WTC11 (cell line): ENCODE measurements at regions of chr12 and their contacts with region 1.

Region 1: DNA sequence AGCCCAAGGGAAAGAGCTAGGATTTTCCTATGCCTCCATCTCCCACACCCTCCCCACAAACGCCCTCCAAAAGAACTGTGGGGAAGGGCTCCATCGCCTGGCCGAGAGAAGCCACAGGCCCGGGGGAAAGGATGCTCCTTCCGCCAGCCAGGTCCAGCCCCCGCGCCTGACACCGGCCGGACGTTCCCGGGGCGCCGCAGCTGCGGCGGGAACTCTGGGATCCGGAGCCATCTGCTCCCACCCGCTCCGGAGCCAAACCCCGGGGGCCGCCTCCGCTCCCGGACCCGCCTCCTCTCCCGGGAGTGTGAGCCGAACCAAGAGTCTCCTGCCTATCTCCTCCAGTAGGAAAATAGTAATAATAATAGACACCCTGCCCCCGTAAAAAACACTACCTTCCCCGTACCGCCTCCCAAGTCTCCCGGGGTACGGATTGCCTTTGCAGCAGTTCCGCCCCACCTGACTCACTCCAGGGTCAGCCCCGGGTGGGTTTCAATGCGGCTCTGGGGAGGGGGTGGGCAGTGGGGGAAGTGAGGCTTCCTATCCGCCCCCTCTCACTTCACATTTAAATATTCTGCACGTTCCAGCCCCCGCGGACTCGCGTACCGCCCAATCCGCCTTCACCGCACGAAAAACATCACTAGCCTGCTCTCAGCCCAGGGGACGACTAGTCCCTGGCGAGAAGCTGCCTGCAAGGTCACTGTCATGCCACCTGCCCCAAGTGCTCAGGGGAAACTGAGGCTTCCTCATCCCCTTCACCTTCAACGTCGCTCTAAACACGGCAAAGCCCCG is 2.4 kb downstream of the AGAP2 start:
- DNase-seq: peak; percentile 80
- ATAC-seq: peak; percentile 70
- H3K4me3 Mint-ChIP-seq: peak overlapping the region; percentile 75
- H3K27ac Mint-ChIP-seq: no peak overlapping the region
- H3K4me1 Mint-ChIP-seq: peaks cover 25% of the 10 kb centered on the region
- H3K27me3 Mint-ChIP-seq: peaks cover 95% of the 10 kb centered on the region
- CTCF ChIP-seq: no peak

Region 2: DNA sequence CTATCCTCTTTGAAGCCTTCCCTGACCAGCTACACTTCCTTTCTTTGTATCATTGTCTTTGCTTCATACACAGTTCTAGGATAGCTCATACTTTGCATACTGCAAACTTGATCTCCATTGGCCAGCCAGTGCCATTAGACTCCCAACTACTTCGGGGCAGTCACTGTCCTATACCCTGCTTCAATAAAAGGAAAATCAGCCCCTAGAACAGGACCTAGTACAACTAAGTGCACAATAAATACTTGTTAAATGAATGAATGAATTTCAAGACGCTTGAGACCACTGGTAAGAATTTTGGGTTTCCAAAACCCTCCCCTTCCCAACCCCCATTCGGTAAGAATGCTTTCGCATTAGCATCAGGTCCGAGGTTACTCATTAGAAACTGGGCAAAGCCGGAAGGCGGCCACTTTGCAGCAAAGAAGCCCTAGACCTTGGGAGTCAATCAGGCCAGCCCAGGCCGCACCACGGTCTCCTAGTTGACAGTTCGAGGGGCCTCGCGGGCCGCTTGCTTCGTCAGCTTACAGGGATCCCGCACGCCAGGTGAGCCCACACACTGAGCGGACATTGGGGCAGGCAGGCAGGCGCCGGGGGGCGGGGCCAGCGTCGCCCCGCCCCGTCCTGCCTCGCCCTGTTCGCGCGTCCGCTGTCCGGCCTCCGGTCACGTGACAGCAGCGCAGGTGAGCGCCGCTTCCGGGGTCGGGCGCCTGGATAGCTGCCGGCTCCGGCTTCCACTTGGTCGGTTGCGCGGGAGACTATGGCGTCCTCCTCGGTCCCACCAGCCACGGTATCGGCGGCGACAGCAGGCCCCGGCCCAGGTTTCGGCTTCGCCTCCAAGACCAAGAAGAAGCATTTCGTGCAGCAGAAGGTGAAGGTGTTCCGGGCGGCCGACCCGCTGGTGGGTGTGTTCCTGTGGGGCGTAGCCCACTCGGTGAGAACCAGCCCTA is 145.3 kb before region 1 on chr12 and contains the start of gene PIP4K2C:
- CTCF ChIA-PET with region 1: interaction called, 22 read pairs
- POLR2A ChIA-PET with region 1: no interaction called
- DNase-seq: peak; percentile 91
- ATAC-seq: peak; percentile 98
- H3K4me3 Mint-ChIP-seq: peak within 1 kb of the TSS; percentile 89
- H3K27ac Mint-ChIP-seq: peak within 1 kb of the TSS; percentile 72
- H3K4me1 Mint-ChIP-seq: peaks cover 14% of the 10 kb centered on the region
- H3K27me3 Mint-ChIP-seq: peaks cover 3% of the 10 kb centered on the region; the same call in 1 of the 2 replicates
- CTCF ChIP-seq: no peak
- total RNA-seq, gene PIP4K2C: 25.4 to 26.9 TPM (median 25.8 TPM) in 3 replicates

Region 3: DNA sequence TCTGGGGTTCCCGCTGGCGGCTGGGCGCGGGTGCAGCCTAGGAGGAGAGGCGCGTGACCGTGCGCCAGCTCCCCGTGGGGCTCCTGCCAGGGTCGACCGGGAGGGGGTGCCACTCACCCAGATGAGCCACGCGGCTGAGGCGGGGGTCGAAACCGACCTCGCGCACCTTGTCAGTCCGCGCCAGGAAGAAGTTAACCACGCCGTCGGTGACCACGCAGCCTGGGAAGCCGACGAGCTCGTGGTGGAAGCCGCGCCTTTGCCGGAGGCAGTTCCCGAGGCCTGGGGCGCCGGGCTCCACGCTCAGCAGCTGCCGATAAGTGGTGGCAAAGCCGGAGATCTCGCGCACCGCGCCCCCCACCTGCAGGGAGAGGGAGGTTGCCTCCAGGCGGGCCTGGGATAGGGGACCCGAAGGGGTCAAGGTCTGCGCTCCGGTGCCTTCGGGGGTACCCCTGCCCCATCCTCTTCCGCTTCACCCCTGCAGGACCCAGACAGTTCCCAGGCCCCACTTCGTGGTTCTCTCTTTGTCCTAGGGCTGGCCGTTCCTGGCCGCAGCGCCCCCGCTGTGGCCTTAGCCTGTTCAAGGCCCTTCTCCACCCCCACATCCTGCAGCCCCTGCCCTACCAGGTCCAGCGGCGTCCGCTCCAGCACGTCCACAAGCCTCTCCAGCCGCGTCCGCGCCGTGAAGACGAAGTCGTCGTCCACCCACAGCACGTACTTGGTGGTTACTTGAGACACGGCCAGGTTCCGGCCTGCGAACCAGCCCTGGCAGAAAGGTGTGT is 108.5 kb before region 1 on chr12:
- CTCF ChIA-PET with region 1: interaction called, 23 read pairs
- POLR2A ChIA-PET with region 1: no interaction called
- DNase-seq: peak; percentile 53
- ATAC-seq: peak; percentile 8
- H3K4me3 Mint-ChIP-seq: peak overlapping the region; percentile 64
- H3K27ac Mint-ChIP-seq: no peak overlapping the region
- H3K4me1 Mint-ChIP-seq: peaks cover 21% of the 10 kb centered on the region
- H3K27me3 Mint-ChIP-seq: peaks cover 100% of the 10 kb centered on the region
- CTCF ChIP-seq: no peak

Region 4: GRCh38 chr12:57693659-57694458 is 42.3 kb before region 1 on chr12 and contains the start of gene OS9:
- CTCF ChIA-PET with region 1: interaction called, 25 read pairs
- POLR2A ChIA-PET with region 1: no interaction called
- DNase-seq: peak; percentile 93
- ATAC-seq: peak; percentile 98
- H3K4me3 Mint-ChIP-seq: no peak within 1 kb of the TSS
- H3K27ac Mint-ChIP-seq: no peak within 1 kb of the TSS
- H3K4me1 Mint-ChIP-seq: no peaks in the 10 kb centered on the region
- H3K27me3 Mint-ChIP-seq: peaks cover 26% of the 10 kb centered on the region
- CTCF ChIP-seq: 0 out of 2 replicates have a peak, but pooled peaks have one; percentile 39
- total RNA-seq, gene OS9: 77.5 to 93.9 TPM (median 93.1 TPM) in 3 replicates

Region 5: GRCh38 chr12:58095002-58095401 is 358.9 kb after region 1 on chr12:
- CTCF ChIA-PET with region 1: no interaction called
- POLR2A ChIA-PET with region 1: no interaction called
- DNase-seq: no peak
- ATAC-seq: no peak
- H3K4me3 Mint-ChIP-seq: no peak overlapping the region
- H3K27ac Mint-ChIP-seq: no peak overlapping the region
- H3K4me1 Mint-ChIP-seq: no peaks in the 10 kb centered on the region
- H3K27me3 Mint-ChIP-seq: peaks cover 3% of the 10 kb centered on the region; the same call in 1 of the 2 replicates
- CTCF ChIP-seq: no peak